ENCODE measurements at regions of chr10 and their contacts with region 1.

Region 1: DNA sequence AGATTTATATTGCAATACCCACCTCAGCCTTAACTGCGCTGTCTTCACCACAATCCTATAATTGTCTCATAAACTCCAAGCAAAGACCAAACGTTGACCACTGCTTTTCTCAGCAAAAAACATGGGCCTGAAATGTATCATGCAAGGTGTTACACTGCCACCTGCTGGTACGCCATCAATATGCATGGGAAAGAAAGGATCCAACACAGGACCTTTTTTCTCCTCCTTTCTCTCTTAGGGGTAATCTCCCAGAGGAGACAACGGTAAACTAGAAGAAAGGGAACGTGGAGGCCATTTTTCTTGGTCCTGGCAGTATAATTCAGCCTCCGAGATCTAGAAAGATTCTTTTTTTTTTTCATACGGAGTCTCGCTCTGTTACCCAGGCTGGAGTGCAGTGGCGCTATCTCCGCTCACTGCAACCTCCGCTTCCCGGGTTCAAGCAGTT is 79.1 kb upstream of the MPP7 start:
- DNase-seq: peak; percentile 93 to 95
- H3K4me3 ChIP-seq: no peak overlapping the region
- H3K4me3 Mint-ChIP-seq: no peak overlapping the region
- H3K27ac Mint-ChIP-seq: no peak overlapping the region
- H3K4me1 ChIP-seq: peaks cover 30% of the 10 kb centered on the region
- H3K4me1 Mint-ChIP-seq: peaks cover 44% of the 10 kb centered on the region
- H3K27me3 ChIP-seq: no peaks in the 10 kb centered on the region
- H3K27me3 Mint-ChIP-seq: no peaks in the 10 kb centered on the region
- CTCF ChIP-seq: peak; percentile 96 to 97

Region 2: GRCh38 chr10:27742195-27743011 is 639.5 kb before region 1 on chr10:
- CTCF ChIA-PET with region 1: interaction called, 10 read pairs
- POLR2A ChIA-PET with region 1: no interaction called
- intact Hi-C with region 1: loop called (anchors 5 kb)
- DNase-seq: peak; percentile 81 to 94
- H3K4me3 ChIP-seq: peak overlapping the region; percentile 75
- H3K4me3 Mint-ChIP-seq: peak overlapping the region; percentile 75
- H3K27ac Mint-ChIP-seq: no peak overlapping the region
- H3K4me1 ChIP-seq: peaks cover 25% of the 10 kb centered on the region
- H3K4me1 Mint-ChIP-seq: peaks cover 5% of the 10 kb centered on the region
- H3K27me3 ChIP-seq: peaks cover 11% of the 10 kb centered on the region
- H3K27me3 Mint-ChIP-seq: peaks cover 30% of the 10 kb centered on the region
- CTCF ChIP-seq: peak; percentile 78 to 86

Region 3: DNA sequence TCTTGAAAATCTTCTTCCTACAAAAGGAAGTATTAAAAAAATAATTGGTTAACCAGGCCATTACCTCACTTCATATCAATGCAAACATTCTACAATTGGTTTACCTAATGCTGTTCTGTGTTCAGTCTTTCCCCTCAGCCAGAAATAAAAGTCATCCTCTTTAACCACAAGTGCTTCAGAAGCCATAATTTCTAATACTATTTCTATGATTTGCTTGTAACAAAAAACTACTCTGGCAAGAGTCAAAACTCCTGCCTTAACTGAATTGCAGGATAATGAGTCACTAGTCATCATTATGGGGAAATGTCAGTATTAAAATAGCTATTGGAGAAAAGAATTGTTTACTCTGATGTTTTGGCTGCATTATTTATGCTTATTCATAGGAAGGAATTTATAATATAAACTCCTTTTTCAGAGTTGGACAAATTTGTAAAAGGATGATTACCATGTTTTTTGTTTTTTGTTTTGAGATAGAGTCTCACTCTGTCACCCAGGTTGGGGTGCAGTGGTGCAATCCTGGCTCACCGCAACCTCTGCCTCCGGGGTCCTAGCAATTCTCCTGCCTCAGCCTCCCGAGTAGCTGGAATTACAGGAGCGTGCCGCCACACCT is 327.6 kb before region 1 on chr10:
- CTCF ChIA-PET with region 1: no interaction called
- POLR2A ChIA-PET with region 1: no interaction called
- intact Hi-C with region 1: no loop called
- DNase-seq: no peak
- H3K4me3 ChIP-seq: no peak overlapping the region
- H3K4me3 Mint-ChIP-seq: no peak overlapping the region
- H3K27ac Mint-ChIP-seq: no peak overlapping the region
- H3K4me1 ChIP-seq: no peaks in the 10 kb centered on the region
- H3K4me1 Mint-ChIP-seq: no peaks in the 10 kb centered on the region
- H3K27me3 ChIP-seq: no peaks in the 10 kb centered on the region
- H3K27me3 Mint-ChIP-seq: no peaks in the 10 kb centered on the region
- CTCF ChIP-seq: no peak

Region 4: DNA sequence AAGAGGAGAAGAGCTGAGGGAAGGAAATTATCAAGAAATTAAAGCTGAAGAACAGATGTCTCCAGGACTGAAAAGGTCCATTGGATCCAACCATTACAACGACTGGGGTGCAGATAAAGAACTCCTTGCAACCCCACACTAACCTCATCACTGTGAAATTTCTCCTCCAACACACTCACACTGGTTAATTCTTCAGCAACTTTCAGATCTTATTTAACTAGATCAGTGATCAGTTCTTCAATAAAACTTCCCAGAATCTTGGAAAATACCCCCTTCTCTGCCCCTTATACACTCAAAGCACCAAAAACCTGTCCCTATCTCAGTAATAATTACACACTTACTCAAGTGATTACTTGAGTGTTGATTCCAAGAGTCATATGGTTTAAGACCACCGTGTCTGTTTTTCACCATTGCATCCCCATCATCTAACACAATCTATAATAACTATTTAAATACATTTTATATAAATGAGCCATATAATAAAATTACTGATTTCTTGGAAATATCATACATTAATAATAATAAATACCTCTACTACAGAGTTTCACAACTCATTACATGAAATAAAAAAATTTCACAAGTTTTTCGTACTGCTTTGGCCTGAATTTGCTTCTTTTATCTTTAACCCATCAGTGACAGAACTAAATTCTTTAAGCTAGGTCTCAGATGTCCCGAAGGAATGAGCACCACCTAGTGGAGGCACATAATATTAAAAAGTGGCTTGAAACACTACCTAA is 202.8 kb before region 1 on chr10:
- CTCF ChIA-PET with region 1: interaction called, 7 read pairs
- POLR2A ChIA-PET with region 1: no interaction called
- intact Hi-C with region 1: loop called (anchors 5 kb)
- DNase-seq: peak in 1 of 2 experiments; percentile 69
- H3K4me3 ChIP-seq: no peak overlapping the region
- H3K4me3 Mint-ChIP-seq: no peak overlapping the region
- H3K27ac Mint-ChIP-seq: no peak overlapping the region
- H3K4me1 ChIP-seq: 0 out of 2 replicates have a peak, but pooled peaks cover 7% of the 10 kb centered on the region
- H3K4me1 Mint-ChIP-seq: peaks cover 22% of the 10 kb centered on the region
- H3K27me3 ChIP-seq: no peaks in the 10 kb centered on the region
- H3K27me3 Mint-ChIP-seq: no peaks in the 10 kb centered on the region
- CTCF ChIP-seq: peak; percentile 75 to 88

Region 5: DNA sequence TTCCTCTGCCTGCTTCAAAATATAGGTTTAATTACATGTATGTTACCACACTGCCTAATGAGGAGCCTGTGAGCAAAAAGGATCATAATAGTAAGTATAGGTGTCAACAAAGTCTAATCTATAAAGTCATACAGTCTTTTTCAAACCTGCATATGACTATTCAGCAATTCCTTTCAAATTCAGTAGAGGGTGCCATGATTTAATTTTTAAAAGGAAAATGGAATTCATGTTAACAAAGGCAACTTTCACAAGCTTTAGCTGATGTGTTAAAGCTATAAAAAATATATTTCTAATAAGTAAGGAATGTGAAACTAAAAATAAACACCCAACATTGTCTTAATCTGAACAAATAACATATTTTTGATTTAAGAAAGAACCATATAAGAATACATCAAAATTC is 131.1 kb before region 1 on chr10:
- CTCF ChIA-PET with region 1: interaction called, 24 read pairs
- POLR2A ChIA-PET with region 1: no interaction called
- intact Hi-C with region 1: loop called (anchors 1 kb)
- DNase-seq: peak in 1 of 2 experiments; percentile 28
- H3K4me3 ChIP-seq: no peak overlapping the region
- H3K4me3 Mint-ChIP-seq: no peak overlapping the region
- H3K27ac Mint-ChIP-seq: no peak overlapping the region
- H3K4me1 ChIP-seq: 0 out of 2 replicates have a peak, but pooled peaks cover 4% of the 10 kb centered on the region
- H3K4me1 Mint-ChIP-seq: peaks cover 12% of the 10 kb centered on the region
- H3K27me3 ChIP-seq: no peaks in the 10 kb centered on the region
- H3K27me3 Mint-ChIP-seq: no peaks in the 10 kb centered on the region
- CTCF ChIP-seq: peak; percentile 51 to 71

Region 6: GRCh38 chr10:28284123-28284522 is 97.8 kb before region 1 on chr10:
- CTCF ChIA-PET with region 1: interaction called, 10 read pairs
- POLR2A ChIA-PET with region 1: no interaction called
- intact Hi-C with region 1: no loop called
- DNase-seq: peak; percentile 79 to 82
- H3K4me3 ChIP-seq: no peak overlapping the region
- H3K4me3 Mint-ChIP-seq: peak overlapping the region; percentile 23
- H3K27ac Mint-ChIP-seq: peak overlapping the region; percentile 48
- H3K4me1 ChIP-seq: peaks cover 23% of the 10 kb centered on the region
- H3K4me1 Mint-ChIP-seq: peaks cover 52% of the 10 kb centered on the region
- H3K27me3 ChIP-seq: no peaks in the 10 kb centered on the region
- H3K27me3 Mint-ChIP-seq: no peaks in the 10 kb centered on the region
- CTCF ChIP-seq: no peak

Region 7: GRCh38 chr10:28334296-28334695 is 47.6 kb before region 1 on chr10:
- CTCF ChIA-PET with region 1: interaction called, 7 read pairs
- POLR2A ChIA-PET with region 1: no interaction called
- intact Hi-C with region 1: loop called (anchors 1 kb)
- DNase-seq: peak in 1 of 2 experiments; percentile 53
- H3K4me3 ChIP-seq: no peak overlapping the region
- H3K4me3 Mint-ChIP-seq: peak overlapping the region; percentile 70
- H3K27ac Mint-ChIP-seq: peak overlapping the region; percentile 83
- H3K4me1 ChIP-seq: peaks cover 26% of the 10 kb centered on the region
- H3K4me1 Mint-ChIP-seq: peaks cover 29% of the 10 kb centered on the region
- H3K27me3 ChIP-seq: no peaks in the 10 kb centered on the region
- H3K27me3 Mint-ChIP-seq: no peaks in the 10 kb centered on the region
- CTCF ChIP-seq: no peak

Region 8: GRCh38 chr10:28367929-28368484 is 13.9 kb before region 1 on chr10:
- CTCF ChIA-PET with region 1: interaction called, 9 read pairs
- POLR2A ChIA-PET with region 1: no interaction called
- intact Hi-C with region 1: loop called (anchors 2 kb)
- DNase-seq: no peak
- H3K4me3 ChIP-seq: no peak overlapping the region
- H3K4me3 Mint-ChIP-seq: no peak overlapping the region
- H3K27ac Mint-ChIP-seq: peak overlapping the region; percentile 86
- H3K4me1 ChIP-seq: peaks cover 59% of the 10 kb centered on the region
- H3K4me1 Mint-ChIP-seq: peaks cover 46% of the 10 kb centered on the region
- H3K27me3 ChIP-seq: no peaks in the 10 kb centered on the region
- H3K27me3 Mint-ChIP-seq: no peaks in the 10 kb centered on the region
- CTCF ChIP-seq: no peak

Region 9: DNA sequence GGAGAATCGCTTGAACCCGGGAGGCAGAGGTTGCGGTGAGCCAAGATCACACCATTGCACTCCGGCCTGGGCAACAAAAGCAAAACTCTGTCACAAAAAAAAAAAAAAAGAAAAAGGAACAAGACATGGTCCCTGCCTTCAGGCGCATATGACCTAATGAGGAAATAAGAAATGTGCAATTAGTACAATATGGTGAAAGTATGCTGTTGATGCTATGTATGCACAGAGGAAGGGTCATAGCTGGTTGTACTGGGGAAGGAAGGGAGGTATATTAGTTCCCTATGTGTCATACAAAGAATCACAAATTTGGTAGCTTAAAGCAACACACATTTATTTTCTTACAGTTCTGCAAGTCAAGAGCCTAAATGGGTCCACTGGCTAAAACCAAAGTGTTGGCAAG is 18.8 kb after region 1 on chr10:
- CTCF ChIA-PET with region 1: no interaction called
- POLR2A ChIA-PET with region 1: no interaction called
- intact Hi-C with region 1: no loop called
- DNase-seq: no peak
- H3K4me3 ChIP-seq: no peak overlapping the region
- H3K4me3 Mint-ChIP-seq: no peak overlapping the region
- H3K27ac Mint-ChIP-seq: no peak overlapping the region
- H3K4me1 ChIP-seq: no peaks in the 10 kb centered on the region
- H3K4me1 Mint-ChIP-seq: no peaks in the 10 kb centered on the region
- H3K27me3 ChIP-seq: no peaks in the 10 kb centered on the region
- H3K27me3 Mint-ChIP-seq: no peaks in the 10 kb centered on the region
- CTCF ChIP-seq: no peak

Region 10: GRCh38 chr10:28432210-28432676 is 50.3 kb after region 1 on chr10:
- CTCF ChIA-PET with region 1: no interaction called
- POLR2A ChIA-PET with region 1: no interaction called
- intact Hi-C with region 1: no loop called
- DNase-seq: peak; percentile 81 to 83
- H3K4me3 ChIP-seq: no peak overlapping the region
- H3K4me3 Mint-ChIP-seq: peak overlapping the region; percentile 41
- H3K27ac Mint-ChIP-seq: no peak overlapping the region
- H3K4me1 ChIP-seq: no peaks in the 10 kb centered on the region
- H3K4me1 Mint-ChIP-seq: no peaks in the 10 kb centered on the region
- H3K27me3 ChIP-seq: no peaks in the 10 kb centered on the region
- H3K27me3 Mint-ChIP-seq: no peaks in the 10 kb centered on the region
- CTCF ChIP-seq: peak; percentile 94 to 95